ENCODE measurements at regions of chr7 and their contacts with region 1.

Region 1: DNA sequence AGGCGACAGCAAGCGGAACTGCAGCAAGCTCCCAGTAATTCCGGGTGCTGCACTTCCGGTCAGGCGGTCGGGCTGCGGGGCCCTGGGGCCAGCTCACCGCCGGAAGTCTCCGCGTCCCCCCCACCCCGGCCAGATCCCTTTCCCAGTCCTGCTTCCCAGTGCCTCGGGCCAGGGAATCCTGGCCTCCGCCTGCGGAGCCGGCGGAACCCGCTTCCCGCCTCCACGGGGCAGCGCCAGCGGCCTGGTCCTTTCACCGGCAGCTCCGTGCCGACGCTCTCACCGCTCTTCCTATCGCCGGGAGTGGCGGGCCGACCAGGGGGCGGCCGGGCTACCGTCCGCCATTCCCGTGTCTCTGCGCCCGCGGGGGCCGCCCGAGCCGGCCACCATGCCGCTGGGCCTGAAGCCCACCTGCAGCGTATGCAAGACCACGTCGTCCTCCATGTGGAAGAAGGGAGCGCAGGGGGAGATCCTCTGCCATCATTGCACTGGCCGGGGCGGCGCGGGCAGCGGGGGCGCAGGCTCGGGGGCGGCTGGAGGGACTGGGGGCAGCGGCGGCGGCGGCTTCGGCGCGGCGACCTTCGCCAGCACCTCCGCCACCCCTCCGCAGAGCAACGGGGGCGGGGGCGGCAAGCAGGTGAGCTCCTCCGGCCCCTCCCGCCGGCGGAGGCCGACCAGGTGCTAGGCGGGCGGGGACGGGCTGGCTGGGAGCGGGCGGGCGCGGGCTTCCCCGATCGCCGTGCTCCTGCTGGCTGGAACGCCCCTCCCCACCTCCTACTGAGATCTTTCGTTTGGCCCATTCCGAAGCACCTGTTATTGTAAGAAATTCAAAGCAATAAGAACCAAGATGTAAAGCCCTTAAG is at the start of gene GATAD1:
- DNase-seq: peak; percentile 79
- H3K4me3 Mint-ChIP-seq: peak within 1 kb of the TSS; percentile 85
- H3K27ac Mint-ChIP-seq: peak within 1 kb of the TSS; percentile 90
- H3K4me1 Mint-ChIP-seq: peaks cover 15% of the 10 kb centered on the region
- H3K27me3 Mint-ChIP-seq: peaks cover 1% of the 10 kb centered on the region
- total RNA-seq, gene GATAD1: 25.1 and 25.4 TPM in 2 replicates

Region 2: DNA sequence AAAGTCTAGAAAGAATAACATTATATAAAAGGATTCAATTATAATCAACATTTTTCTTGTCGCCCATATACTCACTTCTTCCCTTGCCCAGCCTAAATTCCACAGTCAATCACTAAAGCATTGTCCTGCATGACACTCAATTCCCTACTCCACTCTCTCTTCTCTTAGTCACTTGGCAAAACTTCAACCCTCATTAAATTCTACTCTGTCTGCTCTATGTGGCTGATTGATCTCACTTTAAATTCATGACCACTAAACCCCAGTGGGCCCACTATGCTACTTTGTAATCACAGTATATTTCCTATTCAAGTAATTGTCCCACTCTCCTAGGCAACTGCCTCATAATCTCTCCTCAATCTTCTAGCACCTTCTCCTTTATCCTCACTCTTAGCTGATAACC is 621.2 kb before region 1 on chr7:
- intact Hi-C with region 1: loop called (anchors 1 kb)
- DNase-seq: no peak
- H3K4me3 Mint-ChIP-seq: no peak overlapping the region
- H3K27ac Mint-ChIP-seq: no peak overlapping the region
- H3K4me1 Mint-ChIP-seq: no peaks in the 10 kb centered on the region
- H3K27me3 Mint-ChIP-seq: no peaks in the 10 kb centered on the region

Region 3: DNA sequence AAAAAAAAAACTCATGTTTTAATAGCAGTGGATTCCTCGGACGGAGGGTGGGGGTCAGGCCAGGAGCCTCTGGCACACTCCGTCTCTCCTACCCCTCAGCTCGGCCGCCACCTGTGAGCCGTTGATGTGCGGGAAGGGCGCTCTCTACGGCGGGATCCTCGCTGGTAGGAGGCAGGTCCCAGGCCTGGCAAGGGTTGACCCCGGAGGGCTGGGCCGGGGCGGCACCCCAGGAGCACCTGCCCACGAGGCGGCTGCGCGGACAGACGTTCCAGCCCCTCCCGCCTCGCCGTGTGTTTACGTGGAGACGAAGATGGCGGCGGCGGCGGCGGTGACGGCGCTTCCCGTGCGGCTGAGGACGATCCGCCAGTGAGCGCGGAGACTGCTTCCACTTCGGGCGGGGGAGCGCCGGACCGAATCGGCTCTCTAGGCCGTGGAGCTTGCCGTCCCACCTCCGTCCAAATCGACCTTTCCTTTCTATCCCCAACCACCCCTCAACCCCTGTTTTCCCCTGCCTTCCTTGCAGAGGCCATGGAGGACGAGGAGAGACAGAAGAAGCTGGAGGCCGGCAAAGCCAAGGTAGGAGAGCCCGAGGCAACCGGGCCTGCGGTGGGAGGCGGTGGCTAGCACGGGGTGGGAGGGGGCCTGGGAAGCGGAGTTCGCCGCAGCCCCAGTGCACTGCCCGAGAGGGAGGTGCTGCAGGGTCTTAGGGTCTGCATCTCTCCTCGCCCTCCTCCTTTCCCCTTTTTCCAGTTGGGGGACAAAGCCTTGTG is 506.8 kb before region 1 on chr7 and contains the start of gene AKAP9:
- intact Hi-C with region 1: loop called (anchors 5 kb)
- DNase-seq: peak; percentile 87
- H3K4me3 Mint-ChIP-seq: peak within 1 kb of the TSS; percentile 88
- H3K27ac Mint-ChIP-seq: peak within 1 kb of the TSS; percentile 93
- H3K4me1 Mint-ChIP-seq: peaks cover 28% of the 10 kb centered on the region
- H3K27me3 Mint-ChIP-seq: peaks cover 6% of the 10 kb centered on the region
- total RNA-seq, gene AKAP9: 36.2 and 38.3 TPM in 2 replicates

Region 4: GRCh38 chr7:92178927-92179924 is 268.3 kb before region 1 on chr7 and contains the start of gene LRRD1:
- intact Hi-C with region 1: loop called (anchors 2 kb)
- DNase-seq: peak; percentile 85
- H3K4me3 Mint-ChIP-seq: peak within 1 kb of the TSS; percentile 69
- H3K27ac Mint-ChIP-seq: no peak within 1 kb of the TSS
- H3K4me1 Mint-ChIP-seq: peaks cover 9% of the 10 kb centered on the region
- H3K27me3 Mint-ChIP-seq: peaks cover 27% of the 10 kb centered on the region
- total RNA-seq, gene LRRD1: 0.09 TPM in 1 of 2 replicates, not detected in the other

Region 5: GRCh38 chr7:92375013-92375412 is 72.6 kb before region 1 on chr7:
- intact Hi-C with region 1: no loop called
- DNase-seq: no peak
- H3K4me3 Mint-ChIP-seq: no peak overlapping the region
- H3K27ac Mint-ChIP-seq: no peak overlapping the region
- H3K4me1 Mint-ChIP-seq: no peaks in the 10 kb centered on the region
- H3K27me3 Mint-ChIP-seq: no peaks in the 10 kb centered on the region

Region 6: GRCh38 chr7:92421676-92422435 is 25.7 kb before region 1 on chr7:
- intact Hi-C with region 1: loop called (anchors 1 kb)
- DNase-seq: no peak
- H3K4me3 Mint-ChIP-seq: no peak overlapping the region
- H3K27ac Mint-ChIP-seq: no peak overlapping the region
- H3K4me1 Mint-ChIP-seq: peaks cover 14% of the 10 kb centered on the region
- H3K27me3 Mint-ChIP-seq: peaks cover 4% of the 10 kb centered on the region

Measured in activated T-helper 2 cell treated with anti-CD3 and anti-CD28 coated beads, Interferon-gamma antibody, Interleukin-2, Interleukin-4, amounts not matched to agents 10 μg/mL and 5 μg/mL and 100 μg/mL, durations not matched to agents 14 hours and 24 hours and 36 hours (primary cell).